ENCODE measurements at regions of chr9 and their contacts with region 1.

Region 1: GRCh38 chr9:133782157-133783130 is 44.3 kb upstream of the SARDH start:
- DNase-seq: peak; percentile 56
- H3K4me3 ChIP-seq: no peak overlapping the region
- H3K27ac ChIP-seq: no peak overlapping the region
- H3K27me3 ChIP-seq: no peaks in the 10 kb centered on the region
- CTCF ChIP-seq: peak; percentile 94

Region 2: GRCh38 chr9:133992780-133993634 is 210.6 kb after region 1 on chr9:
- in situ Hi-C with region 1: loop called (anchors 10 kb)
- DNase-seq: peak; percentile 80
- H3K4me3 ChIP-seq: peak overlapping the region; percentile 77
- H3K27ac ChIP-seq: peak overlapping the region; percentile 55
- H3K27me3 ChIP-seq: no peaks in the 10 kb centered on the region
- CTCF ChIP-seq: peak; percentile 60

Measured in brain microvascular endothelial cell (primary cell).